AG04450 (cell line): ENCODE measurements at regions of chr11 and their contacts with region 1.

Region 1: GRCh38 chr11:58579192-58580129 is 598 bp downstream of the ZFP91 start:
- DNase-seq: peak; percentile 78
- H3K4me3 ChIP-seq: peak overlapping the region; percentile 85
- H3K27ac ChIP-seq: peak overlapping the region; percentile 94
- H3K27me3 ChIP-seq: no peaks in the 10 kb centered on the region
- CTCF ChIP-seq: peak; percentile 76

Region 2: DNA sequence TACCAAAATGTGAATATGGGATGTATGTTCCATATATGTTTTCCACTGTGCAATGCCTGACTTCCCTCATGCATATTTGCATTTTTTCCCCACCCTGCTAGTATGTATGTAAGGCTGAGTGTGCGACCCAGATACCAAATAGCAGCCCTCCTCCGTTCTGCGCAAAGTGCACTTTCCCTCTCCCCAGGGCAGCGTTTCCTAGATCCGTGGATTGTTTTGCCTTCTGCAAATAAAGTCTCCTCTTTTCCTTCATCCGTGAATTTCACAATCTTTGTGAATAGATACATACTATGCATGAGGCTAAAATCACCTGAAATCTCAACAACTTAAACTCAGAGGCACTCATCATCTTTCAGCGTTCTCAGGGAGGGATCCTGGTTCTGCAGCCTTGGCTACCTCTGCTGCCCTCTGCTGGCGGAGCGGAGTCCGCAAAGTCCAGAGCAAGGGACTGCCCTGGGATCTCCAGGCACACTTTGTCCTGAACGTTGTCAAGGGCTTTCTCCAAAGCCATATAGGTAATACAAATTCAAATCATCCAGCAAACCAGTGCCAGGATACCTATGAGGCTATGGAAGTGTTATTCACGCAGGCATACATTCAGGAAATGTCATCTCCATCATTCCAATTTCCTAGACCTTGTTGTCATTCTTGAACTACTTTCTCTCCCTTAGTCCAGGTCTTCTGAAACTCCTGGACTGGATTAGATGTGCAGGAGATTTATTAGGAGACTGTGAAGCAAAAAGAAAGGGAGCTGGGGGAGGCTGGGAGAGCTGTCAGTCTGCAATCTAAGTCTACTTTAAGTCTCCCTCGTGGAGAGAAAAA is 96.1 kb after region 1 on chr11:
- CTCF ChIA-PET with region 1: interaction called, 36 read pairs
- POLR2A ChIA-PET with region 1: no interaction called
- DNase-seq: peak; percentile 26
- H3K4me3 ChIP-seq: no peak overlapping the region
- H3K27ac ChIP-seq: no peak overlapping the region
- H3K27me3 ChIP-seq: peaks cover 7% of the 10 kb centered on the region
- CTCF ChIP-seq: peak; percentile 100

Region 3: DNA sequence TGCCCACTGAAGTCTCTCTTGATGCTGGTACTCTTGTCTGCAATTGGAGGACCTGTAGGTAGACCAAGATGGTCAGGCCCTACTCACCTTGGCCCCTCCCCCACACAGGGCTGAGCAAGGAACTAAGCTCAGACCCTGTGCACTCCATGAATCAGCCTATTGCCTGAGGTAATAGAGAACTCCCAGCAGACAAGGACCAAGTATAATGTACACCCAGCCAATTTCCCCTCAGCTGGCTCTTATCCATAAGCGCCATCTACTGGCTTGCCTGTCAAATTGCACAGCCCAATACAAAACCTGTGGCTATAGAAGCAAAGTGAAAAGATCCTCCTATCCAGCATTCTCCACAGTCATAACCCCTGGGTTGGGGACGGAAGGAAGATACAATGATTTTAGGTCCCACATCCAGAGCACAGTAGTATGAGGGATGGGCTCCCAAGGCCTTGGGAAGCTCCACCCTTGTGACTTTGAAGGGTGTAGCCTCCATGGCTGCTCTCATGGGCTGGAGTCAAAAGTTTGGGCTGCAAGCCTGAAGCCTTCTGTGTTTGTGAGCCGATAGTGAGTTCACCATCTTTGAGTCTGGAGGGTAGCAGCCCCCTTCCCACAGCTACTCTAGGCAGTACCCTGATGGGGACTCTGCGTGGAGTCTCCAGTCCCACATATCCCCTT is 209.0 kb after region 1 on chr11:
- CTCF ChIA-PET with region 1: interaction called, 11 read pairs
- POLR2A ChIA-PET with region 1: no interaction called
- DNase-seq: no peak
- H3K4me3 ChIP-seq: no peak overlapping the region
- H3K27ac ChIP-seq: no peak overlapping the region
- H3K27me3 ChIP-seq: no peaks in the 10 kb centered on the region
- CTCF ChIP-seq: peak; percentile 75